ENCODE measurements at regions of chr2 and their contacts with region 1.

Region 1: GRCh38 chr2:200525882-200526651 is at the start of gene SGO2:
- DNase-seq: peak; percentile 84 to 95 (median 94)
- ATAC-seq: peak; percentile 100
- H3K4me3 ChIP-seq: peak within 1 kb of the TSS; percentile 74
- H3K4me3 Mint-ChIP-seq: peak within 1 kb of the TSS; percentile 88 to 95 (median 92)
- H3K27ac ChIP-seq: peak within 1 kb of the TSS; percentile 64
- H3K27ac Mint-ChIP-seq: peak within 1 kb of the TSS; percentile 66 to 89 (median 85)
- H3K4me1 ChIP-seq: peaks cover 6 to 8% of the 10 kb centered on the region in 2 donors
- H3K4me1 Mint-ChIP-seq: peaks cover 7 to 34% (median 9%) of the 10 kb centered on the region in 7 donors
- H3K27me3 ChIP-seq: no peaks in the 10 kb centered on the region
- H3K27me3 Mint-ChIP-seq: peaks cover 0 to 1% (median 0%) of the 10 kb centered on the region in 5 donors
- total RNA-seq, gene SGO2: 1.4 to 32.3 (median 2.9) TPM

Region 2: DNA sequence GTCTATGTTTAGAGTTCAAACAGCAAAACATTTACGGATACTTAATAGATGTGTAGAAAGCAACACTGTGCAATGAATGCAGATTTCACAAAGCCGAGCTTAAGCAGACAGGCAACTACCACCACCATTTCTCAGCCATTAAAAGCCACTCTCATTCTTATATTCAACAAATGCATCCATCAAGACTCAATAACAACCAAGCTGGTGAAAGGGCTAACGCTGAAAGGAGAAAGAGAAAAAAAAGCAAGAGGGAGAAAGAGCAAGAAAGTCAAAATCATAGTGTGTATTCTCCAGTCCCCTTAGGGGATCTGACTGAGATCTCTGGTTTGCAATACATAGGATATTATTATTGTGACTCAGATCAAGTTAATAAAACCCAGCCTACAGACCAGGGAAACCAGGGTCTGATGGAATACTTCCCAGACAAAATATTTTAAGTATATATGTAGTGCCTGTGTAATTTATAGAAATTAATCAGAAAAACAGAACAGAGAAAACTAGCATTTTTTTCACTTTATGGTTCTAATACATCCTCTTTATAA is 1082.4 kb before region 1 on chr2:
- CTCF ChIA-PET with region 1: no interaction called
- POLR2A ChIA-PET with region 1: no interaction called
- intact Hi-C with region 1: no loop called
- DNase-seq: no peak
- ATAC-seq: no peak
- H3K4me3 ChIP-seq: no peak overlapping the region
- H3K4me3 Mint-ChIP-seq: no peak overlapping the region
- H3K27ac ChIP-seq: no peak overlapping the region
- H3K27ac Mint-ChIP-seq: no peak overlapping the region
- H3K4me1 ChIP-seq: no peaks in the 10 kb centered on the region
- H3K4me1 Mint-ChIP-seq: no peaks in the 10 kb centered on the region
- H3K27me3 ChIP-seq: peaks cover 3 to 4% of the 10 kb centered on the region in 2 donors
- H3K27me3 Mint-ChIP-seq: peaks cover 9 to 68% (median 43%) of the 10 kb centered on the region in 5 donors

Region 3: DNA sequence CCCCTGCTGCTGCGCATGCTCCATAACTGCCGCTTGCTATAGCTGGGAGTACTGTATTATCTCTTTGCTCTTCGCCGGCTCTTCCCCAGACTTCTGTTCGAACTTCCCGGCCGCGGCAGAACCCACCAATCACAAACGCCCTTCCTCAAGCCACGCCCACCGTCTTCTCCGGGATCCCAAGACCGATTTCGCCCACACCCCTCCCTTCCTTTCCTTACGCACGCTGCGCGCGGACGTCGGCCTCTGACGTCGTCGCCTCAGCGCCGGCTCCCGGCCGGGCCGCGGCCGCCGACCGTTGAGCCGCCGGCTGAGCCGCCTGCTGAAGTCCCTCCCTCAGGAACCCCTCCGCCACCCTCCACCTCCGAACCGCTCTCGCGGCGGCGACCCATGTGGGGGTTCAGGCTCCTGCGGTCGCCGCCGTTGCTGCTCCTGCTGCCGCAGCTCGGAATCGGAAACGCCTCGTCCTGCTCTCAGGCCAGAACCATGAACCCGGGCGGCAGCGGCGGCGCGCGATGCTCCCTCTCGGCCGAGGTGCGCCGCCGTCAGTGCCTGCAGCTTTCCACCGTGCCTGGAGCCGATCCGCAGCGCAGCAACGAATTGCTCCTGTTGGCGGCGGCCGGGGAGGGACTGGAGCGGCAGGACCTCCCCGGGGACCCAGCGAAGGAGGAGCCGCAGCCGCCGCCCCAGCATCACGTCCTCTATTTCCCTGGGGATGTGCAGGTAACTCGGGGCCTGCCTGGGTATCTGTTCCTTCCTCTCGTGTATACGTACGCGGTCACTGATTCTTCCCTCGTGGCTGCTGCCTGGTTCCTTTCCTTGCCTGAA is 614.8 kb before region 1 on chr2 and contains the start of gene C2orf69:
- CTCF ChIA-PET with region 1: no interaction called
- POLR2A ChIA-PET with region 1: no interaction called
- intact Hi-C with region 1: loop called in 1 of 2 experiments (anchors 1 kb)
- DNase-seq: peak; percentile 80 to 92 (median 83)
- ATAC-seq: peak; percentile 93
- H3K4me3 ChIP-seq: peak within 1 kb of the TSS; percentile 75
- H3K4me3 Mint-ChIP-seq: peak within 1 kb of the TSS; percentile 89 to 100 (median 98)
- H3K27ac ChIP-seq: peak within 1 kb of the TSS; percentile 89
- H3K27ac Mint-ChIP-seq: peak within 1 kb of the TSS; percentile 72 to 95 (median 94)
- H3K4me1 ChIP-seq: peaks cover 11 to 19% of the 10 kb centered on the region in 2 donors
- H3K4me1 Mint-ChIP-seq: peaks cover 26 to 47% (median 37%) of the 10 kb centered on the region in 7 donors
- H3K27me3 ChIP-seq: no peaks in the 10 kb centered on the region
- H3K27me3 Mint-ChIP-seq: peaks cover 0 to 14% (median 8%) of the 10 kb centered on the region in 5 donors
- total RNA-seq, gene C2orf69: 10.1 to 15.4 (median 12.7) TPM

Region 4: GRCh38 chr2:200288658-200289427 is 237.2 kb before region 1 on chr2:
- CTCF ChIA-PET with region 1: no interaction called
- POLR2A ChIA-PET with region 1: no interaction called
- intact Hi-C with region 1: no loop called
- DNase-seq: no peak
- ATAC-seq: no peak
- H3K4me3 ChIP-seq: no peak overlapping the region
- H3K4me3 Mint-ChIP-seq: no peak overlapping the region
- H3K27ac ChIP-seq: no peak overlapping the region
- H3K27ac Mint-ChIP-seq: no peak overlapping the region
- H3K4me1 ChIP-seq: no peaks in the 10 kb centered on the region
- H3K4me1 Mint-ChIP-seq: no peaks in the 10 kb centered on the region
- H3K27me3 ChIP-seq: no peaks in the 10 kb centered on the region
- H3K27me3 Mint-ChIP-seq: peaks cover 5 to 40% (median 20%) of the 10 kb centered on the region in 5 donors

Region 5: DNA sequence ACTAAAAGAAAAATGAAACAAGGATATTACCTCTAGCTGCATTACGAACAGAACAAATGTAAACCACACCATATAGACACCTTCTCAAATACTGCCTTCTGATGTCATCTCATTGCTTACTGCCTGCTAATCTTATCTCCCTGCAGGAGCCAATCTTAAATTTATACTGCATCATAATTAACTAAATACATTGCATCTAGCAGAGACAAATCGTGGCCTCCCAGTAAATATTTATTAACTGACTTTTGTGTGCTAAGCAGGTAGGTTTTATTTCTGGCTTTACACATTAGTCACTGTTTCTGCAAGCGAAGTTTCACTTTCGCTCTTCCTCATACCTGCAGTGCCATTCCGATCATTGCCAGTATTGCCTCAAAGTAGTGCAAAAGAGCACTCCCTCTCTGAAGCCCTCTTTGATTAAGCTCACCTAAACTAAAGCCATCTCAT is 152.1 kb before region 1 on chr2:
- CTCF ChIA-PET with region 1: no interaction called
- POLR2A ChIA-PET with region 1: no interaction called
- intact Hi-C with region 1: loop called in 1 of 2 experiments (anchors 5 kb)
- DNase-seq: peak in 7 of 9 donors; percentile 41 to 66 (median 56)
- ATAC-seq: peak; percentile 86
- H3K4me3 ChIP-seq: peak overlapping the region; percentile 74
- H3K4me3 Mint-ChIP-seq: peak overlapping the region; percentile 74 to 96 (median 89)
- H3K27ac ChIP-seq: peak overlapping the region; percentile 66
- H3K27ac Mint-ChIP-seq: peak overlapping the region; percentile 86 to 96 (median 93)
- H3K4me1 ChIP-seq: peaks cover 32 to 34% of the 10 kb centered on the region in 2 donors
- H3K4me1 Mint-ChIP-seq: peaks cover 24 to 59% (median 52%) of the 10 kb centered on the region in 7 donors
- H3K27me3 ChIP-seq: no peaks in the 10 kb centered on the region
- H3K27me3 Mint-ChIP-seq: no peaks in the 10 kb centered on the region

Region 6: DNA sequence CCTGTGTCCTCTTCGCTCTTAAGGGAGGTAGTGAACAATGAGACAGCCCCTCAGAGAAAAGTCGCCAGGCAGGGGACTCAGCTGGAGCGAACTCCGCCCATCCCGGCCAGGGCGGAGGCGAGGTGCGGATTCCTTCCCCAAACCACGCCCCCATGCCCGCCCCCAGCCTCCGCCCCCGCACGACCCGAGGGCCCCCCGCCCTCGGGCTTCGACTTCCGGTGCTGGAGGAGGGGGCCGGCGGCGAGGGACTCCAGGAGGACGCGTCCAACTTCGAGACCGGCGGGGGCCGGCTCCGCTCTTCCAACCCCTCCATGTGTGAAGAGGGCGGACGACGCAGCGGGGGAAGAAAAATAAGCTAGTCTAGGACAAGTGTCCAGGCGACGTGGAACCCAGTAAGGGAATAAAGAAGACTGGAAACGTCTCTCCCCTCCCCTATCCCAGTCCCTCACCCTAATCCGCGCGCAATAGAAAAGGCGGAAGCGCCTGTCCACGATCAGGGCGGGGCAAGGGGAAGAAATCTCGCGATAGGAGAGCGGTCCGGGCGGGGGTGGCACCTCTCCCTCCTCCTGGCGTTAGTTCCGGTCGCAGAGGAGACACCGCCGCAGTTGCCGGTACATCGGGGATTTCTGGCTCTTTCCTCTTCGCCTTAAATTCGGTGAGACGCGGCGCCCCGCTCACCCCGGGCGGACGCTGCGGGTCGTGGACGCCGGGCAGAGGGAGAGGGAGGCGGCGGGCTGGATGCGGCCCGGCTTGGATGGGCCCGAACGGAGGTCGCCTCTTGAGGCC is 285.5 kb after region 1 on chr2 and contains the start of gene BZW1:
- CTCF ChIA-PET with region 1: no interaction called
- POLR2A ChIA-PET with region 1: no interaction called
- intact Hi-C with region 1: loop called (anchors 1 kb)
- DNase-seq: peak; percentile 92 to 99 (median 98)
- ATAC-seq: peak; percentile 91
- H3K4me3 ChIP-seq: peak within 1 kb of the TSS; percentile 89
- H3K4me3 Mint-ChIP-seq: peak within 1 kb of the TSS; percentile 89 to 99 (median 98)
- H3K27ac ChIP-seq: peak within 1 kb of the TSS; percentile 99
- H3K27ac Mint-ChIP-seq: peak within 1 kb of the TSS; percentile 91 to 99 (median 98)
- H3K4me1 ChIP-seq: peaks cover 19 to 24% of the 10 kb centered on the region in 2 donors
- H3K4me1 Mint-ChIP-seq: peaks cover 30 to 56% (median 48%) of the 10 kb centered on the region in 7 donors
- H3K27me3 ChIP-seq: no peaks in the 10 kb centered on the region
- H3K27me3 Mint-ChIP-seq: peaks cover 0 to 2% (median 0%) of the 10 kb centered on the region in 5 donors
- total RNA-seq, gene BZW1: 127 to 246 (median 207) TPM

Region 7: DNA sequence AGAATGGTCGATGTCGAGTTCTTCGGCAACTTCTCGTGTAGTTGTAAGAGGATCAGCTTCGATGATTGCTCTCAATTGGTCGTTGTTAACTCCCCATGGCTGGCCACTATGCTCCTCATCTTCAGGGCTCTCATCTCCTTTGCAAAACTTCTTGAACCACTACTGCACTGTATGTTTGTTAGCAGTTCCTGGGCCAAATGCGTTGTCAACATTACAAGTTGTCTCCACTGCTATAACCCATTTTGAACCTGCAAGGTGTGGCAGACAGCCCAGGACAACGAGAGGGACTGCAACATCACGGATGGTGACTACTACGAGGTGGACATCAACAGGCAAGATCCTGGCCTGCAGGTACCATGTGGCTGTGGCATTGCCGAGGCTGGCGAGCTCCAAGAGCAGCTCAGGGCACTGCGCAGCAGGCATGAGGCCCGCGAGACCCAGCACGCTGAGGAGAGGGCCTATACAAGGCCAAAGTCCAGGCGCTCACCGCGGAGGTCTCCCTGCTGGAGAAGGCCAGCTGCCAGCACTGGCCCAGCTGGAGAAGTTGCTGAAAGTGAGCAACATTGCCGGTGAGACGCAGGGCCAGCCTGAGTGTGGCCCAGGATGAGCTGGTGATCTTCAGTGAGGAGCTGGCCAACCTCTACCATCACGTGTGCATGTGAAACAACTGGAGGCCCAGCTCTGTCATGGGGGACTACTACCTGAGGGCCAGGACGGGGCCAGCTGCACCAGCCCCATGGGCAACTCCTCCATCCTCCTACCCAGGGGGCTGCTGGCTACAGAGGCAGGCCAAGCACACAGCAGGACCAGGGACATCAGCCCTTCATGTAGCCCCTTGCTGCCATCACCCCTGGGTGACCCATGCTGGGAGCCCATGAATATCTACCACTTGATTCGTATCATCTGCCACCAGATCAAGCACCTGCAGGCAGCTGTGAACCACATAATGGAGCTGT is 318.2 kb after region 1 on chr2:
- CTCF ChIA-PET with region 1: no interaction called
- POLR2A ChIA-PET with region 1: no interaction called
- intact Hi-C with region 1: no loop called
- DNase-seq: no peak
- ATAC-seq: no peak
- H3K4me3 ChIP-seq: no peak overlapping the region
- H3K4me3 Mint-ChIP-seq: no peak overlapping the region
- H3K27ac ChIP-seq: no peak overlapping the region
- H3K27ac Mint-ChIP-seq: no peak overlapping the region
- H3K4me1 ChIP-seq: no peaks in the 10 kb centered on the region
- H3K4me1 Mint-ChIP-seq: peaks cover 0 to 12% (median 0%) of the 10 kb centered on the region in 7 donors
- H3K27me3 ChIP-seq: no peaks in the 10 kb centered on the region
- H3K27me3 Mint-ChIP-seq: no peaks in the 10 kb centered on the region

Region 8: GRCh38 chr2:201130524-201131186 is 604.6 kb after region 1 on chr2:
- CTCF ChIA-PET with region 1: interaction called, 3 read pairs
- POLR2A ChIA-PET with region 1: no interaction called
- intact Hi-C with region 1: loop called in 1 of 2 experiments (anchors 5 kb)
- DNase-seq: peak in 7 of 9 donors; percentile 37 to 59 (median 53)
- ATAC-seq: peak; percentile 71
- H3K4me3 ChIP-seq: peak overlapping the region; percentile 28
- H3K4me3 Mint-ChIP-seq: peak overlapping the region; percentile 54 to 88 (median 72)
- H3K27ac ChIP-seq: peak overlapping the region; percentile 27
- H3K27ac Mint-ChIP-seq: peak overlapping the region; percentile 89 to 98 (median 96)
- H3K4me1 ChIP-seq: peaks cover 57 to 63% of the 10 kb centered on the region in 2 donors
- H3K4me1 Mint-ChIP-seq: peaks cover 61 to 80% (median 76%) of the 10 kb centered on the region in 7 donors
- H3K27me3 ChIP-seq: no peaks in the 10 kb centered on the region
- H3K27me3 Mint-ChIP-seq: no peaks in the 10 kb centered on the region

Region 9: GRCh38 chr2:202265467-202266277 is 1739.6 kb after region 1 on chr2 and contains the start of gene NOP58:
- CTCF ChIA-PET with region 1: no interaction called
- POLR2A ChIA-PET with region 1: no interaction called
- intact Hi-C with region 1: loop called in 1 of 2 experiments (anchors 10 kb)
- DNase-seq: peak; percentile 69 to 96 (median 93)
- ATAC-seq: peak; percentile 90
- H3K4me3 ChIP-seq: peak within 1 kb of the TSS; percentile 93
- H3K4me3 Mint-ChIP-seq: peak within 1 kb of the TSS in 9 of 10 donors; percentile 53 to 71 (median 64)
- H3K27ac ChIP-seq: peak within 1 kb of the TSS; percentile 92
- H3K27ac Mint-ChIP-seq: peak within 1 kb of the TSS in 6 of 9 donors; percentile 4 to 83 (median 76)
- H3K4me1 ChIP-seq: peaks cover 17 to 34% of the 10 kb centered on the region in 2 donors
- H3K4me1 Mint-ChIP-seq: peaks cover 11 to 27% (median 21%) of the 10 kb centered on the region in 7 donors
- H3K27me3 ChIP-seq: no peaks in the 10 kb centered on the region
- H3K27me3 Mint-ChIP-seq: no peaks in the 10 kb centered on the region
- total RNA-seq, gene NOP58: 105 to 259 (median 110) TPM

Measured in naive thymus-derived CD4-positive, alpha-beta T cell (primary cell).